ENCODE measurements at regions of chr19 and their contacts with region 1.

Region 1: DNA sequence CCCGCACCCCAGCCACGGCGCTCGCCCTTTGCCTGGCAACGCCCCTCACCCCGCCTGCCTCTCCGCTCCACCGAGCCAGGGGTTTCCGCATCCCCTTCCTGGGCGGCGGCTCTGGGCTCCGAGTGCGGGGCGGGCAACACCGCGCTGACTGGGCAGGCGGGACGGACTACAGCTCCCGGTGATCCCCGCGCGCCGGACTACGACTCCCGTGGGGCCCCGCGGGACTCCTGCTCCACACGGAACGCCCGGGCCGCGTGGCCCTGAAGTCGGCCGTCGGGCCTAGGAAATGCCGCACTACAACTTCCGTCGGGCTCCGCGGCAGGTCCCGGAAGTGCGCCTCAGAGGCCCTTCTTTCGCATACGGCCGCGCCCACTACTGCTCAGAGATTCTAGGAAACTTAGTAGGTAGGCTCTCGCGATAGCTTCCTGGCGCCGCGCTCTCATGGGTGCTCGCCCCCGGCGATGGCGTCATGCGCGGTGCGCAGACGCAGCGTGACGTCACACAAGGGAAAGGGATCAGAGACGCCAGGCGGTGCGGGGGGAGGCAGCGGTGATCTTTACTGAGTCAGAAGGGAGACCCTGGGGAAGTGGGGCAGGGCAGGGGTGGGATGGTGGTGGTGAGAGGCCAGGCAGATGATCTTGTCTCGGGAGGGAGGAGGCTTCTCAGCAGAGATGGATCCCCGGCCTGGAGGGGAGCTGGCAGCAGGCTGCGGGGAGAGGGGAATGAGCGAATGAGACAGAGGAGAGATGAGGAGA is at the start of gene JOSD2:
- DNase-seq: peak; percentile 94 to 100 (median 96)
- ATAC-seq: peak; percentile 91
- H3K4me3 ChIP-seq: peak within 1 kb of the TSS; percentile 75 to 93
- H3K4me3 Mint-ChIP-seq: peak within 1 kb of the TSS; percentile 91
- H3K27ac ChIP-seq: peak within 1 kb of the TSS; percentile 90 to 92
- H3K27ac Mint-ChIP-seq: peak within 1 kb of the TSS; percentile 99
- H3K4me1 ChIP-seq: peaks cover 16% of the 10 kb centered on the region
- H3K4me1 Mint-ChIP-seq: peaks cover 16% of the 10 kb centered on the region
- H3K27me3 ChIP-seq: no peaks in the 10 kb centered on the region
- H3K27me3 Mint-ChIP-seq: peaks cover 4% of the 10 kb centered on the region
- CTCF ChIP-seq: no peak
- total RNA-seq, gene JOSD2: 8.8 to 9.9 TPM

Region 2: DNA sequence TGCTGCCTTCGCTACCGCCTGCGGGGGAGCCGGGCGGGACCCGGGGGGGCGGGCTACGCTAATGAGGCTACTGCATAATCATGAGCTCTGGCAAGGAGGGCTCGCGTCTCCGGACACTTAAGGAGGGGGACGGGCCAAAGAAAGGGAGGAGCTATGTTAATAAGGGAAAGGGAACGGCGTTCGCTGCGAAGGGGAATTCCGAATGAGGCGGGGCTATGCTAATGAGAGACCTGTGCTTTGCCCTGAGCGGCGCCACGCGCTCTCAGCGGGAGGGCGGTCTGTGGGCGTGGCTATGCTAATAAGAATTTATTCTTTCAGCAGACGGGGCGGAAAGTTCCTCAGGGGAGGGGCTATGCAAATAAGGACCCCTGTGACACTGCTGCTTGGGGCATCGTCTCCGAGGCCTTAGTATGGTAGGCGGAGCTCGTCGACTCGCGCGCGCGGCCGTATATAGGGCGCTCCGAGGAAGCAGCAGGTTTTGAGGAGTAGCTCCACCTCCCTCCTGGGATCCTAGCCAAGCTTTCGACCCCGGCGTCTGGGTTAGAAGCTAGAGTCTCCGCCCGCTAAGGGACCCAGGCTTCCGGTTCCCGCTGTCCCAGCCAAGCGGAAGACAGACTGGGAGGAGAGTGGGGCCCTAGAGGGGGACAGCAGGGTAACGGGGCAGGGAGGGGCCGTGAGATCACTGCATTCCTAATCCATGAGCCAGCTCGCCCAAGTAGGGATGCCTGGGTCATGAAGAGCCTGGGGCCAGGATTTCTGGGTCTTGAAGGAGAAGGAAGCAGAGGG is 870.9 kb before region 1 on chr19 and contains the start of gene RRAS:
- CTCF ChIA-PET with region 1: no interaction called
- POLR2A ChIA-PET with region 1: no interaction called
- intact Hi-C with region 1: loop called in 1 of 2 experiments (anchors 5 kb)
- DNase-seq: peak; percentile 98 to 100 (median 99)
- ATAC-seq: peak; percentile 66
- H3K4me3 ChIP-seq: peak within 1 kb of the TSS; percentile 64 to 75
- H3K4me3 Mint-ChIP-seq: peak within 1 kb of the TSS; percentile 95
- H3K27ac ChIP-seq: peak within 1 kb of the TSS; percentile 64 to 98
- H3K27ac Mint-ChIP-seq: peak within 1 kb of the TSS; percentile 96
- H3K4me1 ChIP-seq: peaks cover 51% of the 10 kb centered on the region
- H3K4me1 Mint-ChIP-seq: peaks cover 58% of the 10 kb centered on the region
- H3K27me3 ChIP-seq: no peaks in the 10 kb centered on the region
- H3K27me3 Mint-ChIP-seq: no peaks in the 10 kb centered on the region
- CTCF ChIP-seq: no peak
- total RNA-seq, gene RRAS: 3.6 to 4.9 TPM

Region 3: GRCh38 chr19:50333035-50333736 is 178.1 kb before region 1 on chr19:
- CTCF ChIA-PET with region 1: no interaction called
- POLR2A ChIA-PET with region 1: no interaction called
- intact Hi-C with region 1: loop called in 1 of 2 experiments (anchors 5 kb)
- DNase-seq: peak; percentile 71 to 93 (median 88)
- ATAC-seq: peak; percentile 74
- H3K4me3 ChIP-seq: peak overlapping the region; percentile 58 to 77
- H3K4me3 Mint-ChIP-seq: peak overlapping the region; percentile 85
- H3K27ac ChIP-seq: no peak overlapping the region
- H3K27ac Mint-ChIP-seq: peak overlapping the region; percentile 24
- H3K4me1 ChIP-seq: peaks cover 48% of the 10 kb centered on the region
- H3K4me1 Mint-ChIP-seq: peaks cover 47% of the 10 kb centered on the region
- H3K27me3 ChIP-seq: peaks cover 27 to 39% of the 10 kb centered on the region in 2 experiments
- H3K27me3 Mint-ChIP-seq: peaks cover 57% of the 10 kb centered on the region
- CTCF ChIP-seq: no peak

Region 4: GRCh38 chr19:50383852-50384684 is 127.2 kb before region 1 on chr19 and contains the start of gene POLD1:
- CTCF ChIA-PET with region 1: no interaction called
- POLR2A ChIA-PET with region 1: interaction called, 5 read pairs
- intact Hi-C with region 1: loop called in 1 of 2 experiments (anchors 1 kb)
- DNase-seq: peak; percentile 98 to 100 (median 98)
- ATAC-seq: peak; percentile 93
- H3K4me3 ChIP-seq: peak within 1 kb of the TSS; percentile 70 to 79
- H3K4me3 Mint-ChIP-seq: peak within 1 kb of the TSS; percentile 97
- H3K27ac ChIP-seq: peak within 1 kb of the TSS; percentile 45 to 72
- H3K27ac Mint-ChIP-seq: peak within 1 kb of the TSS; percentile 91
- H3K4me1 ChIP-seq: peaks cover 14% of the 10 kb centered on the region
- H3K4me1 Mint-ChIP-seq: peaks cover 33% of the 10 kb centered on the region
- H3K27me3 ChIP-seq: no peaks in the 10 kb centered on the region
- H3K27me3 Mint-ChIP-seq: no peaks in the 10 kb centered on the region
- CTCF ChIP-seq: no peak
- total RNA-seq, gene POLD1: 19.4 to 21.8 TPM

Region 5: DNA sequence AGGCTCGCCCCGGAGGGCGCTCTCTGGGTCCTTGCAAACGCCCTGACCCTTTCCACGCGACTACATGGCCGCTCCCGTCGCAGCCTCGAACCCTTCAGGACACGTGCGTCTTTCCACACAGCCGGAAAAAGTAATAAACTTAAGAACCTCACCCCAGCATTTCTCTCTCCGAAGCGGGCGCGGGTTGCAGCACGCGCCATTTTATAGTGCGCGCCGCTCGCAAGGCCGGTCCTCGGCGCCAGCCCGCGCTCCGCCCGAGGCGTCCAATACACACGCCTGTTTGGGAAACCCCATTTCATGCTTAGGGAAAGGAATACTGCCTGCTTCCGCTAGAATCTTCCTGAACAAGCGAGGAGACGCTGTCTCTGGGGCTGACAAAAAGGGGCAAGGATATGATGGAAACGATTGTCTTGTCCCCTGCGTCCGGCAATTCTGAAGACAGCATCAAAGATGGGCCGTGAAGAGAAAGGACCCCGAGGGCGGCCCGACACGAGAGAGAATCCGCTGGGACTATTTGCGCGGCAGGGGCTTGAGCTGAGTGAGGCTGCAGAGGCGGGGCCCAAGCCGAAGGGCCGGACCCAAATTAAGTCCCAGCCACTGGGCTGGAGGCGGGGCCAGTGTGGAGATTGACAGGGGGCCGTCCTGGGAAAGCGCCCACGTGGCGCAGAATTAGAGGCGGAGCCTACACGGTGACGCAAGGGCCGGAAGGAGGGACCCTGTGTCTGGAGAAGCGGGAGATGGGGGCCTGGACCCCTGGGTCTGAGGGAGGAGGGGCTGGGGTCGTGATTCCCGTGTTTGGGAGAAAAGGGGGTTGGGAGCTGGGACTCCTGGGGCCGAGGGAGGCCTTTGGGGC is 293.4 kb after region 1 on chr19:
- CTCF ChIA-PET with region 1: no interaction called
- POLR2A ChIA-PET with region 1: no interaction called
- intact Hi-C with region 1: loop called (anchors 1 kb)
- DNase-seq: peak; percentile 91 to 99 (median 96)
- ATAC-seq: peak; percentile 95
- H3K4me3 ChIP-seq: peak overlapping the region; percentile 91 to 96
- H3K4me3 Mint-ChIP-seq: peak overlapping the region; percentile 98
- H3K27ac ChIP-seq: peak overlapping the region; percentile 99
- H3K27ac Mint-ChIP-seq: peak overlapping the region; percentile 100
- H3K4me1 ChIP-seq: peaks cover 18% of the 10 kb centered on the region
- H3K4me1 Mint-ChIP-seq: peaks cover 43% of the 10 kb centered on the region
- H3K27me3 ChIP-seq: no peaks in the 10 kb centered on the region
- H3K27me3 Mint-ChIP-seq: no peaks in the 10 kb centered on the region
- CTCF ChIP-seq: no peak

Measured in CD8-positive, alpha-beta T cell (primary cell).